Transverse colon (tissue), 4 donors: ENCODE measurements at regions of chr22 and their contacts with region 1.

Region 1: GRCh38 chr22:26461188-26461810 is 22.3 kb downstream of the HPS4 start:
- DNase-seq: peak; percentile 64
- H3K4me3 ChIP-seq: no peak overlapping the region
- H3K27ac ChIP-seq: no peak overlapping the region
- H3K4me1 ChIP-seq: no peaks in the 10 kb centered on the region
- H3K27me3 ChIP-seq: no peaks in the 10 kb centered on the region
- CTCF ChIP-seq: peak; percentile 72 to 79 (median 75)
- EP300 ChIP-seq: no peak
- POLR2A ChIP-seq: no peak

Region 2: DNA sequence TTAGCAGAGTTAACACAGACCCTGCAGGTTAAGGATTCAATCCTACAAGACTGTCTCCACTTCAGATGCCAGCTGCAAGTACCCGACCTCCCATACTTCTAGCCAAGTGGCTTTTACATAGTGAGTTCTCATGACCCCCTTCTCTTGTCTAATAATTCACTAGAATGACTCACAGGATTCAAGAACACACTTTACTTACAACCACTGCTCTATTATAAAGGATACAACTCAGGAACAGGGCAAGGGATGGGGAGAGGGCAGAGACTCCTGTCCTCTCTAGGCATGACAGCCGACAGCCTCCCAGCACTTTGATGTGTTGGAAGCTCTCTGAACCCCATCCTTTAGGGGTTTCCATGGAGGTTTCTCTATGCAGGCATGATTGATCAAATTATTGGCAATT is 659.3 kb before region 1 on chr22:
- in situ Hi-C with region 1: no loop called
- intact Hi-C with region 1: loop called (anchors 5 kb)
- DNase-seq: no peak
- H3K4me3 ChIP-seq: no peak overlapping the region
- H3K27ac ChIP-seq: no peak overlapping the region
- H3K4me1 ChIP-seq: no peaks in the 10 kb centered on the region
- H3K27me3 ChIP-seq: peaks cover 15% of the 10 kb centered on the region
- CTCF ChIP-seq: no peak
- EP300 ChIP-seq: no peak
- POLR2A ChIP-seq: no peak

Region 3: GRCh38 chr22:26398741-26399153 is 62.6 kb before region 1 on chr22:
- in situ Hi-C with region 1: loop called in 2 of 4 experiments (anchors 5 kb)
- intact Hi-C with region 1: loop called (anchors 1 kb)
- DNase-seq: peak; percentile 57
- H3K4me3 ChIP-seq: no peak overlapping the region
- H3K27ac ChIP-seq: no peak overlapping the region
- H3K4me1 ChIP-seq: no peaks in the 10 kb centered on the region
- H3K27me3 ChIP-seq: peaks cover 20% of the 10 kb centered on the region
- CTCF ChIP-seq: peak; percentile 61 to 77 (median 74)
- EP300 ChIP-seq: no peak
- POLR2A ChIP-seq: no peak

Region 4: DNA sequence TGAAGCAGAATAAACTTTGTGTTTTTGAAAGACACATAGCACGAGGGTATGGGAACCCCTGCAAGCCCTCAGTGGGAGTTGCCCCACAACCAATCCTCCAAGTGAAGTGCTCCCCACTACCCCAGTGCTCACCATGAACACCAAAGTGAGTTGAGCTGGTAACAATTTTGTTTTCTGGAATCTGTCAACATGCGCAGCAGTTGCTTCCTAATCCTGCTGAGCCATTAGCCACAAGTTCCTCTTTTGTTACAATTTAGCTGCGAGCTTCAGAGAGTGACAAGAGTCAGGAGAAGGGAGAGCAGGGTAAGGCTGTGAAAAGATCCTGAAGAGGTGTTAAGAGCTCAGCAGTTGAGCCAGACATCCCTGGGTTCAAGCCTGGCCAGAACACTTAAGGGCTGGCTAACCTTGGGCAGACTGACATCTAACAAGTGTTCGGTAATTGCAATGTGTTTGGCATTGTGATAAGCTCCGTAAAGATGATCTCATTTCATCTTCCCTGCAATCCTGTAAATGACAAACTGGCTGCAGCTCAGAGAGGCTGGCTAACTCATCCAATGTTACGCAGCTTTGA is 56.4 kb before region 1 on chr22:
- in situ Hi-C with region 1: loop called in 1 of 4 experiments (anchors 5 kb)
- intact Hi-C with region 1: no loop called
- DNase-seq: no peak
- H3K4me3 ChIP-seq: no peak overlapping the region
- H3K27ac ChIP-seq: no peak overlapping the region
- H3K4me1 ChIP-seq: no peaks in the 10 kb centered on the region
- H3K27me3 ChIP-seq: peaks cover 16% of the 10 kb centered on the region
- CTCF ChIP-seq: no peak
- EP300 ChIP-seq: no peak
- POLR2A ChIP-seq: no peak